Right lobe of liver (tissue), 6 donors: ENCODE measurements at regions of chr7 and their contacts with region 1.

Region 1: GRCh38 chr7:101287032-101287431 is 34.6 kb downstream of the IFT22 start:
- DNase-seq: no peak
- ATAC-seq: peak in 1 of 4 donors; percentile 18
- H3K4me3 ChIP-seq: peak overlapping the region in 1 of 3 donors; percentile 10
- H3K27ac ChIP-seq: peak overlapping the region in 2 of 3 donors; percentile 72 to 88
- H3K4me1 ChIP-seq: peaks cover 0 to 41% (median 6%) of the 10 kb centered on the region in 4 donors
- H3K27me3 ChIP-seq: no peaks in the 10 kb centered on the region
- CTCF ChIP-seq: no peak
- POLR2A ChIP-seq: no peak

Region 2: DNA sequence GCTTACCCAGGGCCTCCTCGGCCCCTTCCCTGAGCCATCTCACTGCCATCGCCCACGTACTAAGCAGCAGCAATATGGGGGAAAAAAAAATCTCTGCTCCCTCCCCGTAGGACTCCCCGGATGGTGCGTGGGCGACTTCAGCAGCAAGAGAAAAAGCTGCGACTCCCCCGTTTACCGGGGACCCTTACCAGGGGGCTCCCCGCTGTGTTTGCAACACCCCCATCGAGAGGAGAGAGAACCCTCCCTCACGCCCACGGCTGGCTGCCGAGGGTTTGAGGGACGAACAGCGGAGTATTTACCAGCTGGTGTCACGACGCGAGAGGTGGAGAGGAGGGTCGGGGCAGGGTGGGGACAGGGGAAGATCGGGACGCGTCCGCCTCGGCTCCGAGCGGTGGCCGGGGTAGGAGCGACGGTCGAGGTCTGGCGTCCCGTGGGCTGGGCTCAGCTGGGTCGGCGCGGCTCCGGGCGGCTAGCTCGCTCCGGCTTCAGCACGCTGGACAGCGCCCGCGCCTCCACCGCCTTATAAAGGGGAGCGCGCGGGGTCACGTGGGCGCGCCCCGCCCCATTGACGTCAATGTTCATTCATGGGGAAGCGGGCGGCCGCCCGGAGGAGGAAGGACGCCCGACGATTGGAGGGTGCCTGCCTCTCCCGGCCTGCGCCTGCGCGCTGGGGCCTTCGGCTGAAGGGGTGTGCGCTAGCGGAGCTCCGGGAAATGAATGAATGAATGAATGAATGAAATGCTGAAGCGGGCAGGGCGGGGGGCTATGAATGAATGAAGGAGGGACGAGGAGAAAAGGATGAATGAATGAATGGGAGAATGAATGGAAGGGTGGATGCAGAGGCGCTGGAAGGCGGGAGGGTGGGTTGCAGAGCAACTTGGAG is 121.7 kb before region 1 on chr7 and contains the start of gene VGF:
- intact Hi-C with region 1: loop called in 1 of 2 experiments (anchors 10 kb)
- DNase-seq: peak; percentile 90 to 92 (median 91)
- ATAC-seq: peak; percentile 85 to 95 (median 90)
- H3K4me3 ChIP-seq: no peak within 1 kb of the TSS
- H3K27ac ChIP-seq: no peak within 1 kb of the TSS
- H3K4me1 ChIP-seq: peaks cover 0 to 20% (median 0%) of the 10 kb centered on the region in 4 donors
- H3K27me3 ChIP-seq: peaks cover 0 to 19% of the 10 kb centered on the region in 2 donors
- CTCF ChIP-seq: no peak
- POLR2A ChIP-seq: no peak
- total RNA-seq, gene VGF: not detected

Region 3: GRCh38 chr7:101201695-101202604 is 85.1 kb before region 1 on chr7:
- intact Hi-C with region 1: no loop called
- DNase-seq: peak; percentile 75 to 84 (median 77)
- ATAC-seq: peak; percentile 72 to 82 (median 80)
- H3K4me3 ChIP-seq: peak overlapping the region; percentile 45 to 56 (median 47)
- H3K27ac ChIP-seq: peak overlapping the region in 2 of 3 donors; percentile 1 to 66
- H3K4me1 ChIP-seq: peaks cover 0 to 11% (median 0%) of the 10 kb centered on the region in 4 donors
- H3K27me3 ChIP-seq: no peaks in the 10 kb centered on the region
- CTCF ChIP-seq: no peak
- POLR2A ChIP-seq: no peak